ENCODE measurements at regions of chr12 and their contacts with region 1.

Region 1: GRCh38 chr12:131007031-131007739 is 53.5 kb downstream of the ADGRD1 start:
- DNase-seq: peak; percentile 33
- H3K4me3 ChIP-seq: no peak overlapping the region
- H3K27ac ChIP-seq: peak overlapping the region in 3 of 4 donors; percentile 34 to 76 (median 43)
- H3K4me1 ChIP-seq: peaks cover 0 to 3% (median 0%) of the 10 kb centered on the region in 4 donors
- H3K27me3 ChIP-seq: no peaks in the 10 kb centered on the region
- CTCF ChIP-seq: no peak
- EP300 ChIP-seq: peak; percentile 39
- POLR2A ChIP-seq: no peak

Region 2: GRCh38 chr12:130961921-130962451 is 45.2 kb before region 1 on chr12:
- in situ Hi-C with region 1: no loop called
- intact Hi-C with region 1: loop called (anchors 5 kb)
- DNase-seq: peak; percentile 25
- H3K4me3 ChIP-seq: no peak overlapping the region
- H3K27ac ChIP-seq: peak overlapping the region; percentile 27 to 60 (median 50)
- H3K4me1 ChIP-seq: peaks cover 0 to 14% (median 2%) of the 10 kb centered on the region in 4 donors
- H3K27me3 ChIP-seq: no peaks in the 10 kb centered on the region
- CTCF ChIP-seq: no peak
- EP300 ChIP-seq: peak; percentile 87
- POLR2A ChIP-seq: no peak

Region 3: DNA sequence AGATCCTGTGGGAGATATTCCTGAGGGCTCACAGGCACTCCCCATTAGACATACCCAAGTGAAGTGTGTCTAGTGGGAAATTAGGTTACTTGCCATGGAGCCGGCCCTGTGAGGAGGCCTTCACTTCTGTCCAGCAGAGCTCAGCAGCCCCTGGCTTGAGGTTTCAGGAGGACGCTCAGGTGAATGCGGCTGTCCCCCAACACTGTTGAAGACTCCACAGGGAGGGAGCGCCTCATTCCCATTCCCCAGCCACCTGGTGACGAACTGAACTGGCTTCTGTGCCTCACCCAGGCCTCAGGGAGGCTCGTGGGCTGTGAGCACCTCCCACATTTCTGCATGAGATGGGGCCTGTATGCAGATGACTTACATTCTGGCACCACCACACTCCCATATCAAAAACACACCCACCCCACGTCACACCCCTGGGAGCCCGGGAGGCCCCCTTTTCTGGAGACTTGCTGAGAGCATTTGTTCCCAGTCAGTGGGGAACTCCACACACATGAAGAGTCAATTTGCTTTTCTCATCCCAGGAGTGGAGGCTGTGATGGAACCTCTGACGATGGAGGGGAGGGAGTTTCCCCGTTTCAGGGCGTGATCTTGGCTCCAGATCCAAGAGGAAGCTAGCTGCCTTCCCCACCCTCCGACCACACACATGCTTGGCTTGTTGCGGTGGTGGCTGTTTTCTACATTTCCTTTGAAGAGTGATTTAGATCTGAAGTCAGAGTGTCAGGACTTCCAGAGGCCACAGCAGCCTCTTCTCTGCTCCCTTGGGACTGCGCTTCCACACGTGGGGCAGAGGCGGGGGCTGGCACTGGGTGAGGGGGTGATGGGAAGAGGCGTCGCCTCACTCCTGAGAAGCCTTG is 67.3 kb after region 1 on chr12:
- in situ Hi-C with region 1: no loop called
- intact Hi-C with region 1: no loop called
- DNase-seq: no peak
- H3K4me3 ChIP-seq: no peak overlapping the region
- H3K27ac ChIP-seq: no peak overlapping the region
- H3K4me1 ChIP-seq: no peaks in the 10 kb centered on the region
- H3K27me3 ChIP-seq: no peaks in the 10 kb centered on the region
- CTCF ChIP-seq: no peak
- EP300 ChIP-seq: no peak
- POLR2A ChIP-seq: no peak